MCF 10A (cell line): ENCODE measurements at regions of chr18 and their contacts with region 1.

Region 1: DNA sequence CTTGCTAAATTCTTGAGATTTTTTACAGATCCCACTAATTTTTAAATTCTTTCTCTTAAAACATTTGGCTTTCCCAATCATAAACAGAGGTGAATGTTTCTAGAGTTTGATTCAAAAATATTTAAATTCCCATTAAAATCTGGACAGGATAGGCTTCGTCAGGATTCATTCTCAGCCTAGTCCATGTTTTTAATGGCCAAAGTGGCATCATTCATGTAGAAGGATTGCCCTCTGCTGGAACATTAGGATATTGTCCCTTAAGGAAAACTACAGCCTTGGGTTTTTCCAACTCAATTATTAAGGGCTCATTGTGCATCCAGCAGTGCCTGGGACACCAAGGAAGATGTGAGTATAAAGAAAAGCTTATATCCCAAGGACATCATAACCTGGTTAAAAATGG is 71.7 kb downstream of the TPGS2 start:
- DNase-seq: peak; percentile 70
- H3K4me3 Mint-ChIP-seq: no peak overlapping the region
- H3K27ac Mint-ChIP-seq: no peak overlapping the region
- H3K4me1 Mint-ChIP-seq: peaks cover 11% of the 10 kb centered on the region
- H3K27me3 Mint-ChIP-seq: no peaks in the 10 kb centered on the region
- CTCF ChIP-seq: peak; percentile 79

Region 2: DNA sequence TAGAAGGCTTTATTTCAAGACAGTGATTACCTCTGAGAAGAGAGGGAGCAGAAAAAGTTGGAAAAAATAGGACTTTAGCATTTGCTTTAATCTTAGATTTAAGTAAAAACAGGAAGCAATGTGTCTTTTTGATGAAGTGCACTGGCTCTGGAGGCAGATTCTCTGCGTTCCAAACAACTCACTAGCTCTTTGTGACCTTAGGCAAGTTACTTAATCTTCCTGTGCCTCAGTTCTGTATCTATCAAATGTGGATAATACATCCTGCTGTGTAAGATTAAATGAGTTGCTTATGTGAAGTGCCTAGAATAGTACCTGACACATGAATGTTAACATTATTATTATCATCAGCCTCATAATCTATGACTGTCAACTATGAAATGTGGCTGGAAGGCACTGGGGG is 732.1 kb before region 1 on chr18:
- CTCF ChIA-PET with region 1: no interaction called
- POLR2A ChIA-PET with region 1: no interaction called
- intact Hi-C with region 1: loop called (anchors 10 kb)
- DNase-seq: no peak
- H3K4me3 Mint-ChIP-seq: no peak overlapping the region
- H3K27ac Mint-ChIP-seq: no peak overlapping the region
- H3K4me1 Mint-ChIP-seq: peaks cover 13% of the 10 kb centered on the region
- H3K27me3 Mint-ChIP-seq: no peaks in the 10 kb centered on the region
- CTCF ChIP-seq: no peak

Region 3: DNA sequence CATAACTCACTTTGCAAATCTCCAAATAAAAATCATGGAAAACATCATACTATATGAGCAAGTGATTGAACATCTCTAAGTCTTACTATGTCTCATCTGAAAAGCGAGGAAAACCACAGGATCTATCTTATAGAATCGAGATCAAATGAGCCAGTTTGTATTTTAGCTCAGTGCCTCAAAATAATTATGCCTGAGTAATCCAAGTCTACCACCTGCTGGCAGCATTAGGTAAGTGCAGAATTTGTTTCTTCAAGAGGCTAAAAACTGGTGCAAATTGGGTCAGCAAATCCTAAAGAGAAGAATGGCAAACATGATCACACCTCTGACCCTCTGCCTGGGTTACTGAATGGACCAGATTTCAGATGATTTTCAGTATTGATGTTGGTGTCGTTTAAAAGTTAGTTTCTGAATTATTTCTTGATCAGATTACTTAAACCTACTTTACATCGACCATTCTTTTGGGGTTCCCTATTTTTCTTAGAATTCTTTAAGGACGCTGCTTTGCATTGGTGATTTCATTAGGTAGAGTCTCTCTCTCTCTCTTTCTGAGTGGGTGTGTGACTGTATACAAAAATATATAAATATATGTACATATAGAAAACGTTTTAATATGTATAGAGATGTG is 472.3 kb before region 1 on chr18:
- CTCF ChIA-PET with region 1: interaction called, 4 read pairs
- POLR2A ChIA-PET with region 1: no interaction called
- intact Hi-C with region 1: loop called (anchors 5 kb)
- DNase-seq: peak; percentile 75
- H3K4me3 Mint-ChIP-seq: no peak overlapping the region
- H3K27ac Mint-ChIP-seq: no peak overlapping the region
- H3K4me1 Mint-ChIP-seq: no peaks in the 10 kb centered on the region
- H3K27me3 Mint-ChIP-seq: no peaks in the 10 kb centered on the region
- CTCF ChIP-seq: peak; percentile 67

Region 4: DNA sequence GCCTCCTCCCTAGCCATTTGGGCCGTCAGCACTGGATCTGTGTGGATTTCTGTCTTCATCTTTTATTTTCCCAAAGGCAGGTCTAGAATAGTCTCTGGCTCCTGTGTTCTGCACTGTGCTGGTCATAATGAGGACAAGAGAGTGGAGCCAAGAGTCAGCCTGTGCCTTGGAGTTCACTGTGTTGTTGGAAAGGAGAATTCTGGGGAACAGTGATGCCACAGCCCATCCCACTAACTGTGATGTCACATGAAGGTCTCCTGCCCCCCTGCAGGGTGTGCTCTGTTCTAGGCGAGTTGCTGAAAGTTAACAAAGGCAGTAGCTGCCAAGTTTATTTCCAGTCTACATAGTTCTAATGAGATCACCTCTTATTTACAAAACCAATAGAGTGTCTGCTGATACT is 176.8 kb before region 1 on chr18:
- CTCF ChIA-PET with region 1: interaction called, 3 read pairs
- POLR2A ChIA-PET with region 1: no interaction called
- intact Hi-C with region 1: loop called (anchors 2 kb)
- DNase-seq: peak; percentile 16
- H3K4me3 Mint-ChIP-seq: no peak overlapping the region
- H3K27ac Mint-ChIP-seq: peak overlapping the region; percentile 71
- H3K4me1 Mint-ChIP-seq: peaks cover 20% of the 10 kb centered on the region
- H3K27me3 Mint-ChIP-seq: no peaks in the 10 kb centered on the region
- CTCF ChIP-seq: no peak

Region 5: DNA sequence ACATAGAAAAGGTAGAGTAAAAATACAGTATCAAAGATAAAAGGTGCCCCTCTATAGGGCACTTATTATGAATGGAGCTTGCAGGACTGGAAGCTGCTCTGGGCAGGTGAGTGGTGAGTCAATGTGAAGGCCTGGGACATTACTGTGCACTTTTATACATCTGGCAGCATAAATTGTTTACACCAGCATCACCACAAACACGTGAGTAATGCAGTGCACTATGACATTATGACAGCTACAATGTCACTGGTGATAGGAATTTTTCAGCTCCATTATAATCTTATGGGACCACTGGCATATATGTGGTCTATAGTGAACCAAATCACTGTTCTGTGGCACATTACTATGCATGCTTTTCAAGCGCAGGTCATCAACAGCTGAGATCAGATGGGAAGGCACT is 23.7 kb after region 1 on chr18:
- CTCF ChIA-PET with region 1: no interaction called
- POLR2A ChIA-PET with region 1: no interaction called
- intact Hi-C with region 1: no loop called
- DNase-seq: no peak
- H3K4me3 Mint-ChIP-seq: no peak overlapping the region
- H3K27ac Mint-ChIP-seq: no peak overlapping the region
- H3K4me1 Mint-ChIP-seq: peaks cover 4% of the 10 kb centered on the region
- H3K27me3 Mint-ChIP-seq: no peaks in the 10 kb centered on the region
- CTCF ChIP-seq: no peak